ENCODE measurements at regions of chr2 and their contacts with region 1.

Region 1: GRCh38 chr2:113930448-113930847 is 40.6 kb downstream of the ACTR3 start:
- DNase-seq: no peak
- H3K4me3 Mint-ChIP-seq: no peak overlapping the region
- H3K27ac Mint-ChIP-seq: no peak overlapping the region
- H3K4me1 Mint-ChIP-seq: peaks cover 17% of the 10 kb centered on the region
- H3K27me3 Mint-ChIP-seq: no peaks in the 10 kb centered on the region

Region 2: DNA sequence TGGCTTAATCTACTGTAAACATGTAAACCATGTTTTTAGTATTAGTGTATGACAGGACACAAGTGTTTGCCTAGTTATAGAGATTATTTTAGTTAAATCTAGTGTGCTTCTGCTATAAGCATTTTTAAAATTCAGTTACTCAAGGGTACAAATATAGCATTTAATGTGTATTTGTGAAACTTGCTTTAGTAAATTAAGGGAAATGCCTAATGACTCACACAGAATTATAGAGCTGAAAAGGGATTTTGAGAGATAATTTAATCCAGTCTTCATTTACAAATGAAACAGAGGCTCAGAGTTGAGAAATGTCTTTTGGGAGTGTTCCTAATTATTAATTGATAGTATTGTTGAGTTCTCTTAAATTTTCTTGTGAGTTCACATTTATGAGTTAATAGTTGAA is 32.4 kb before region 1 on chr2:
- CTCF ChIA-PET with region 1: interaction called, 5 read pairs
- POLR2A ChIA-PET with region 1: interaction called, 10 read pairs
- DNase-seq: no peak
- H3K4me3 Mint-ChIP-seq: peak overlapping the region; percentile 38
- H3K27ac Mint-ChIP-seq: peak overlapping the region; percentile 4
- H3K4me1 Mint-ChIP-seq: peaks cover 96% of the 10 kb centered on the region
- H3K27me3 Mint-ChIP-seq: no peaks in the 10 kb centered on the region

Region 3: DNA sequence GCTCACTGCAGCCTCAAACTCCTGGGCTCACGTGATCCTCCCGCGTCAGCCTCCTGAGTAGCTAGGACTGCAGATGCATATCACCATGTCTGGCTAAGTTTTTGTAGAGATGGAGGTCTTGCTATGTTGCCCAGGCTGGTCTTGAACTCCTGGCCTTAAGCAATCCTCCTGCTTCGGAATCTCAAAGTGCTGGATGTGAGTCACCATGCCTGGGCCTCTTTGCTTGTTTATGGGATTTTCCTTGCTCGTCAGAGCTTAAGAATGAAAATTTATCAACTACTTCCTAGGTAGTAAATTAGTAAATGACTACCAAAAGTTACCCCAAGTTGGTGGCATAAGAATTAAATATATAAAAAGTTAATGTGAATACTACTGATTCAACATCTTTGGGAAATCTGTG is 10.4 kb after region 1 on chr2:
- CTCF ChIA-PET with region 1: no interaction called
- POLR2A ChIA-PET with region 1: no interaction called
- DNase-seq: no peak
- H3K4me3 Mint-ChIP-seq: no peak overlapping the region
- H3K27ac Mint-ChIP-seq: no peak overlapping the region
- H3K4me1 Mint-ChIP-seq: peaks cover 2% of the 10 kb centered on the region
- H3K27me3 Mint-ChIP-seq: no peaks in the 10 kb centered on the region

Measured in activated CD4-positive, alpha-beta T cell treated with anti-CD3 and anti-CD28 coated beads, Interleukin-2, amount 10 ng/mL, durations not matched to agents 7 days and 5 days (primary cell).